ENCODE measurements at regions of chr1 and their contacts with region 1.

Region 1: DNA sequence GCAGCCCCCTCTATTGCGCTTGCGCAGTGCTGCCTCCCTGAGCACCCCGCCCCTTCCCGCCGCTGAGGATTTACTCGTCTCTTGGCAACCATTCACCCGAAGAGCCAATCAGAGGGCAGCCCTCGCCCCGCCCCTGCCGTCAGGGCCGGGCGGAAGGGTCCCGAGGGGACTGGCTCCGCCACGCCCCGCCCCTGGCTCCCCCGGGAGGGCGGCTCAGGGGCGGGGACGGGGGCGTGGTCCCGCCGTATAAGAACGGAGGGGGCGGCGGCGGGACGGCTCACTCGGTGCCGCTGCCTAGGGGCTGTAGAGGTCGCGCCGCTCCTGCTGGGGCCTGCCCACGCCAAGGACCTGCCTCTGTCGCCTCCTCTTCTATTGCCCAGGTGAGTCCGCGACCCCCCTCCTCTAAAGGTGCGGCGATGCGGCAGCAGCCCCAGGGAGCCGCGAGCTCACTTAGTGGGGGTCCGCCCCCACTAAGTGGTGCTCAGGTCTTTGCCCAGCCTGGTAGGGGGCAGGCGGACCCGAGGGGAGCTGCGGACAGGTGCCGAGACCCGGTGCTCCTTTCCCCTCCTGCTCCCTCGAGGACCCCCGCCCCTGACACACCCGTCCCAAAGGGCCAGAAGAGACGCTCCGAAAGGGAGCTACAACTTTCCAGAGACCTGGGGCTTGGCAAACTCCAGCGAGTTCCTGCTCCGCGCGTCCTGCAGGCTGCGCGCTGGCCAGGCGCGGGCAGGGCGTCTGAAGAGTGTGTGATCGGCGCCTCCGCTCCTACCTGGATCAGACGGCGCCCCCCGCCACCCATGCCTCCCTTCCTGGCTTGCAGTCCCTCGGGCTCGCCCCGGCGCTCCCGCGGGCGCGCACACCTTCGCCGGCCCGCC is at the start of gene TENT5C:
- DNase-seq: peak; percentile 97 to 99 (median 99)
- ATAC-seq: peak; percentile 89
- H3K4me3 ChIP-seq: peak within 1 kb of the TSS; percentile 96
- H3K4me3 Mint-ChIP-seq: peak within 1 kb of the TSS; percentile 99
- H3K27ac ChIP-seq: peak within 1 kb of the TSS; percentile 85 to 95
- H3K27ac Mint-ChIP-seq: peak within 1 kb of the TSS; percentile 90
- H3K4me1 ChIP-seq: peaks cover 33% of the 10 kb centered on the region
- H3K4me1 Mint-ChIP-seq: peaks cover 57% of the 10 kb centered on the region
- H3K27me3 ChIP-seq: no peaks in the 10 kb centered on the region
- H3K27me3 Mint-ChIP-seq: no peaks in the 10 kb centered on the region
- CTCF ChIP-seq: no peak
- total RNA-seq, gene TENT5C: 122 to 123 TPM

Region 2: DNA sequence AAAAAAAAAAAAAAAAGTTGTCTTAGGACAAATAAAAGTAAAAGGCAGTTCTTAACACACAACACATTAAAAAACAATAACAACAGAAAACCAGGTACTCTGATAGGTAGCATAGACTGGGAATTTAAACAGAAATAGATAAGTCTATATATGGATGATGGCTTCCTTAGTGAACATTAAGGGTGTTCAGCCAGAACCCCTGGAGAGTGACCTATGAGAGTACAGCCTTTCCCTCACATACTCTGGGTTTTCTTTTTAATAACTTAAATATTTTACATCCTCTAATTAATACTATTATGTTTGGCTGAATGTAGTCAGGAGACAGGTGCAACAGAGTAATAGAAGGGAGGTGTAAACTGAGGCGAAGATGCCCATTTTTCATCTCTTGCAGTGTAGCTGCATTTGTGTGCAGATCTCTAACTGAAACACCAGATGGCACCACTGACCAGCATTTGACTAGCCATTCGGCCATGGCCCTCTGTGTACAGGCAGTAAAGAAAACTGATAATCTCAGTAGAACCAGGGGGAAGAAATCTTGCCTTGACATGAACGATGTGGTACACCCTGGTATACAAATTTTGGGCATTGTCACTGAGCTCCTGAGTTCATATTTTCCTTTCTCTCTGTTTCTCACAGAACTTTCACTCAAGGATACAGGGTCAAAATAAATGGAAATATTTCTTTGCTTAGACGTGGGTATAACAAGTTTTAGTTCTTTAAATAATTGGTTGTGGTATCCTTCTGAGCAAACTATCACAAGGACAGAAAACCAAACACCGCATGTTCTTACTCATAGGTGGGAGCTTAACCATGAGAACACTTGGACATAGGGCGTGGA is 538.3 kb before region 1 on chr1:
- CTCF ChIA-PET with region 1: no interaction called
- POLR2A ChIA-PET with region 1: no interaction called
- intact Hi-C with region 1: loop called in 1 of 2 experiments (anchors 5 kb)
- DNase-seq: peak in 8 of 14 experiments; percentile 7 to 68 (median 38)
- ATAC-seq: peak; percentile 79
- H3K4me3 ChIP-seq: no peak overlapping the region
- H3K4me3 Mint-ChIP-seq: no peak overlapping the region
- H3K27ac ChIP-seq: no peak overlapping the region
- H3K27ac Mint-ChIP-seq: no peak overlapping the region
- H3K4me1 ChIP-seq: no peaks in the 10 kb centered on the region
- H3K4me1 Mint-ChIP-seq: peaks cover 25% of the 10 kb centered on the region
- H3K27me3 ChIP-seq: no peaks in the 10 kb centered on the region
- H3K27me3 Mint-ChIP-seq: no peaks in the 10 kb centered on the region
- CTCF ChIP-seq: peak; percentile 62

Region 3: GRCh38 chr1:117367047-117368018 is 238.7 kb before region 1 on chr1 and contains the start of gene MAN1A2:
- CTCF ChIA-PET with region 1: interaction called, 3 read pairs
- POLR2A ChIA-PET with region 1: interaction called, 10 read pairs
- intact Hi-C with region 1: loop called in 1 of 2 experiments (anchors 5 kb)
- DNase-seq: peak; percentile 47 to 87 (median 70)
- ATAC-seq: peak; percentile 62
- H3K4me3 ChIP-seq: peak within 1 kb of the TSS; percentile 69
- H3K4me3 Mint-ChIP-seq: peak within 1 kb of the TSS; percentile 97
- H3K27ac ChIP-seq: peak within 1 kb of the TSS; percentile 64 to 83
- H3K27ac Mint-ChIP-seq: peak within 1 kb of the TSS; percentile 98
- H3K4me1 ChIP-seq: peaks cover 35% of the 10 kb centered on the region
- H3K4me1 Mint-ChIP-seq: peaks cover 87% of the 10 kb centered on the region
- H3K27me3 ChIP-seq: no peaks in the 10 kb centered on the region
- H3K27me3 Mint-ChIP-seq: no peaks in the 10 kb centered on the region
- CTCF ChIP-seq: no peak
- total RNA-seq, gene MAN1A2: 45.6 to 49.7 TPM

Region 4: GRCh38 chr1:117654493-117655219 is 48.6 kb after region 1 on chr1:
- CTCF ChIA-PET with region 1: interaction called, 6 read pairs
- POLR2A ChIA-PET with region 1: interaction called, 130 read pairs
- intact Hi-C with region 1: loop called (anchors 1 to 2 kb)
- DNase-seq: peak in 3 of 14 experiments; percentile 43 to 62 (median 49)
- ATAC-seq: peak; percentile 13
- H3K4me3 ChIP-seq: peak overlapping the region; percentile 4
- H3K4me3 Mint-ChIP-seq: peak overlapping the region; percentile 71
- H3K27ac ChIP-seq: peak overlapping the region in 1 of 2 donors; percentile 43
- H3K27ac Mint-ChIP-seq: peak overlapping the region; percentile 84
- H3K4me1 ChIP-seq: peaks cover 94% of the 10 kb centered on the region
- H3K4me1 Mint-ChIP-seq: peaks cover 84% of the 10 kb centered on the region
- H3K27me3 ChIP-seq: no peaks in the 10 kb centered on the region
- H3K27me3 Mint-ChIP-seq: peaks cover 20% of the 10 kb centered on the region
- CTCF ChIP-seq: no peak

Region 5: DNA sequence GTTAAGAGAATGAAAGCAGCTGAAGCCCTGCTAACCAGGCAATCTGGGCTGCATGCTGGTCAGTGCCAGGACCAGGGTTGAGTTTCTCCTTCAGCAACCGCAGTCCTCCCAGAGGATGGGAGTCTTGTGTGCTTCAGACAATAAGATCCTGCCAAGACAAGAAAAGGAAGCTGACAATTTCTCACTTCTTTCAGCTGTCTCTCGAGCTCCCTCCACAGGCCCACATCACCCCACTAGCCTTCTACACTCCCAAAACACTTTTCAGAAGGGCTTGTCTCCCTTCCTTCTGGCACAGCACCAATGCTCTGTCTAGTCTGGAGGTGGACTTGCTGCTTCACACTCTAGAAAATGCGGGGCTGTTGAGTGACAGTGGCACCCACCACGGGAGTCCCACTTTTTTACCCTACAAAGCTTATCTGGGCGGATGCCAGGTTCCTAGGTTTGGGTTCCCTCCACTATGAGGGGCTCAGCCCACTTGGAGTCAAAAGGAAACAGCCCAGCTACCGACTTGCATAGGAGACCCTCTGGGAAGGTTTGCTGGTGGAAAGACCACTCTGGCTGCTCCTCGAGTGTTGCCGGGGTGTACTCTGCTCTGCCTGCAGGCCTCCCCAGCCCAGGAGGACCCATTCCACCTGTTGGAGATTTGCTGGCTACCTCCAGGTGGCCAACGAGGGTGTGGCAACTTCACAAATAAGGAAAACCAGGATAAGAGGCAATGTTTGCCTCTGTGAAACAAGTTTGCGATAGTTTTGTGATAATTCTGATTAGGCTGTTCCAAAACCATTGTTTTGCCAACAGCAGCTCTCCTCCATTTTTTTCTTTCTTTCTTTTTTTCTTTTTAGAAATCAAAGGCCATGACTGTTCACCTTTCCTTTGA is 68.7 kb after region 1 on chr1:
- CTCF ChIA-PET with region 1: interaction called, 30 read pairs
- POLR2A ChIA-PET with region 1: interaction called, 28 read pairs
- intact Hi-C with region 1: loop called (anchors 2 kb)
- DNase-seq: peak in 13 of 14 experiments; percentile 39 to 82 (median 57)
- ATAC-seq: peak; percentile 86
- H3K4me3 ChIP-seq: no peak overlapping the region
- H3K4me3 Mint-ChIP-seq: no peak overlapping the region
- H3K27ac ChIP-seq: no peak overlapping the region
- H3K27ac Mint-ChIP-seq: no peak overlapping the region
- H3K4me1 ChIP-seq: peaks cover 13% of the 10 kb centered on the region
- H3K4me1 Mint-ChIP-seq: peaks cover 7% of the 10 kb centered on the region
- H3K27me3 ChIP-seq: no peaks in the 10 kb centered on the region
- H3K27me3 Mint-ChIP-seq: peaks cover 13% of the 10 kb centered on the region
- CTCF ChIP-seq: peak; percentile 61

Region 6: GRCh38 chr1:117698398-117699160 is 92.6 kb after region 1 on chr1:
- CTCF ChIA-PET with region 1: no interaction called
- POLR2A ChIA-PET with region 1: no interaction called
- intact Hi-C with region 1: no loop called
- DNase-seq: no peak
- ATAC-seq: no peak
- H3K4me3 ChIP-seq: no peak overlapping the region
- H3K4me3 Mint-ChIP-seq: no peak overlapping the region
- H3K27ac ChIP-seq: no peak overlapping the region
- H3K27ac Mint-ChIP-seq: no peak overlapping the region
- H3K4me1 ChIP-seq: no peaks in the 10 kb centered on the region
- H3K4me1 Mint-ChIP-seq: no peaks in the 10 kb centered on the region
- H3K27me3 ChIP-seq: peaks cover 0 to 11% of the 10 kb centered on the region in 2 experiments
- H3K27me3 Mint-ChIP-seq: peaks cover 22% of the 10 kb centered on the region
- CTCF ChIP-seq: no peak

Region 7: GRCh38 chr1:117758444-117759316 is 152.7 kb after region 1 on chr1:
- CTCF ChIA-PET with region 1: interaction called, 4 read pairs
- POLR2A ChIA-PET with region 1: interaction called, 3 read pairs
- intact Hi-C with region 1: loop called (anchors 2 to 5 kb)
- DNase-seq: peak; percentile 48 to 83 (median 56)
- ATAC-seq: peak; percentile 86
- H3K4me3 ChIP-seq: peak overlapping the region; percentile 52
- H3K4me3 Mint-ChIP-seq: peak overlapping the region; percentile 84
- H3K27ac ChIP-seq: no peak overlapping the region
- H3K27ac Mint-ChIP-seq: no peak overlapping the region
- H3K4me1 ChIP-seq: peaks cover 14% of the 10 kb centered on the region
- H3K4me1 Mint-ChIP-seq: peaks cover 10% of the 10 kb centered on the region
- H3K27me3 ChIP-seq: peaks cover 0 to 4% of the 10 kb centered on the region in 2 experiments
- H3K27me3 Mint-ChIP-seq: peaks cover 36% of the 10 kb centered on the region
- CTCF ChIP-seq: peak; percentile 95

Region 8: GRCh38 chr1:119140177-119141019 is 1534.4 kb after region 1 on chr1 and contains the start of gene WARS2:
- CTCF ChIA-PET with region 1: no interaction called
- POLR2A ChIA-PET with region 1: no interaction called
- intact Hi-C with region 1: loop called in 1 of 2 experiments (anchors 10 kb)
- DNase-seq: peak; percentile 85 to 99 (median 89)
- ATAC-seq: peak; percentile 91
- H3K4me3 ChIP-seq: peak within 1 kb of the TSS; percentile 76
- H3K4me3 Mint-ChIP-seq: no peak within 1 kb of the TSS
- H3K27ac ChIP-seq: peak within 1 kb of the TSS; percentile 97 to 100
- H3K27ac Mint-ChIP-seq: no peak within 1 kb of the TSS
- H3K4me1 ChIP-seq: peaks cover 19% of the 10 kb centered on the region
- H3K4me1 Mint-ChIP-seq: peaks cover 18% of the 10 kb centered on the region
- H3K27me3 ChIP-seq: no peaks in the 10 kb centered on the region
- H3K27me3 Mint-ChIP-seq: no peaks in the 10 kb centered on the region
- CTCF ChIP-seq: no peak
- total RNA-seq, gene WARS2: 15.8 to 16.5 TPM